GM10248 (cell line): ENCODE measurements at regions of chr2 and their contacts with region 1.

Region 1: GRCh38 chr2:219029829-219030165 is 11.5 kb downstream of the CFAP65 start:
- DNase-seq: peak; percentile 90
- CTCF ChIP-seq: peak; percentile 95

Region 2: GRCh38 chr2:218995972-218996711 is 33.7 kb before region 1 on chr2:
- CTCF ChIA-PET with region 1: interaction called, 19 read pairs
- POLR2A ChIA-PET with region 1: no interaction called
- DNase-seq: peak; percentile 88
- CTCF ChIP-seq: peak; percentile 92

Region 3: GRCh38 chr2:219010162-219010756 is 19.5 kb before region 1 on chr2:
- CTCF ChIA-PET with region 1: interaction called, 17 read pairs
- POLR2A ChIA-PET with region 1: no interaction called
- DNase-seq: peak; percentile 69
- CTCF ChIP-seq: peak; percentile 56

Region 4: GRCh38 chr2:219065484-219065883 is 35.7 kb after region 1 on chr2:
- CTCF ChIA-PET with region 1: interaction called, 27 read pairs
- POLR2A ChIA-PET with region 1: no interaction called
- DNase-seq: no peak
- CTCF ChIP-seq: no peak

Region 5: GRCh38 chr2:219119422-219120043 is 89.7 kb after region 1 on chr2:
- CTCF ChIA-PET with region 1: interaction called, 50 read pairs
- POLR2A ChIA-PET with region 1: no interaction called
- DNase-seq: peak; percentile 65
- CTCF ChIP-seq: peak; percentile 78

Region 6: GRCh38 chr2:219160186-219161017 is 130.6 kb after region 1 on chr2 and contains the start of gene NHEJ1:
- CTCF ChIA-PET with region 1: interaction called, 151 read pairs
- POLR2A ChIA-PET with region 1: no interaction called
- DNase-seq: peak; percentile 97
- CTCF ChIP-seq: peak; percentile 94

Region 7: GRCh38 chr2:219484343-219485200 is 454.8 kb after region 1 on chr2:
- CTCF ChIA-PET with region 1: no interaction called
- POLR2A ChIA-PET with region 1: no interaction called
- DNase-seq: no peak
- CTCF ChIP-seq: no peak